ENCODE measurements at regions of chr11 and their contacts with region 1.

Region 1: GRCh38 chr11:9565822-9566560 is 7.5 kb upstream of the WEE1 start:
- DNase-seq: peak; percentile 63
- H3K4me3 ChIP-seq: no peak overlapping the region
- H3K27ac ChIP-seq: peak overlapping the region; percentile 93
- H3K4me1 ChIP-seq: peaks cover 21% of the 10 kb centered on the region
- H3K27me3 ChIP-seq: no peaks in the 10 kb centered on the region
- CTCF ChIP-seq: no peak
- POLR2A ChIP-seq: peak; percentile 55

Region 2: GRCh38 chr11:9428706-9429105 is 137.3 kb before region 1 on chr11:
- intact Hi-C with region 1: no loop called
- DNase-seq: no peak
- H3K4me3 ChIP-seq: no peak overlapping the region
- H3K27ac ChIP-seq: no peak overlapping the region
- H3K4me1 ChIP-seq: no peaks in the 10 kb centered on the region
- H3K27me3 ChIP-seq: no peaks in the 10 kb centered on the region
- CTCF ChIP-seq: no peak
- POLR2A ChIP-seq: no peak

Region 3: DNA sequence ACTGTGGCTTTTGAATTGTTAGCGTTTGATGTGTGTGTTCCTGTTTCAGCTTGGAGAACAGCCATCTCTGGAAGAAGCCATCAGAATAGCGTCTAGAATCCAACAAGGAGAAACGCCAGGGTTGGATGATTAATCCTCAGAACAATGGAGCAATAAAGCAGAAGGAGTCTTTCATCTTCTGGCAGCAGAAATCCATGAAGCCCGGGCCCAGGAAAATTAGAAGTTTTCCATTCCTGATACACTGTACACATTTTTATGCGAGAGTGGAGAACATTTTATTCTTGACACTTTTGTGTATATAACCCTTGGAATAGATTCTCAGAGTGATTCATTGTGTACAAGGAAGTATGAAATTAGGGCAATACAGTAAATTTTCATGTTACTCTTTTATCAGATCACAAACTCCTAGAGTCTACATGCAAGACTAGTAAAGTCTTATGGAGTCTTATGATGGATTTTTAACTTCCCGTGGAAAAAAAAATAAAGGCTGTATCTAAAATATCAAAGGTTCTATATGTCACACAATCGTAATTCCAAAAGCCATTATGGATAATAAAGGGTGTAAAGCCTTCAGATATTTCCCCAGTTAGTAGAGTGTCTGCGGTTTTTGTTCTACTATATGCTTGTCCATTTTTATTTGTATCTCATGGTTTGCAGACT is 38.4 kb before region 1 on chr11:
- intact Hi-C with region 1: loop called (anchors 5 kb)
- DNase-seq: peak; percentile 71
- H3K4me3 ChIP-seq: no peak overlapping the region
- H3K27ac ChIP-seq: peak overlapping the region; percentile 70 to 72
- H3K4me1 ChIP-seq: peaks cover 28% of the 10 kb centered on the region
- H3K27me3 ChIP-seq: no peaks in the 10 kb centered on the region
- CTCF ChIP-seq: no peak
- POLR2A ChIP-seq: no peak

Region 4: GRCh38 chr11:9787981-9788521 is 222.1 kb after region 1 on chr11:
- intact Hi-C with region 1: no loop called
- DNase-seq: no peak
- H3K4me3 ChIP-seq: no peak overlapping the region
- H3K27ac ChIP-seq: no peak overlapping the region
- H3K4me1 ChIP-seq: no peaks in the 10 kb centered on the region
- H3K27me3 ChIP-seq: no peaks in the 10 kb centered on the region
- CTCF ChIP-seq: no peak
- POLR2A ChIP-seq: no peak

Region 5: GRCh38 chr11:9906043-9906791 is 340.2 kb after region 1 on chr11:
- intact Hi-C with region 1: no loop called
- DNase-seq: peak; percentile 20
- H3K4me3 ChIP-seq: no peak overlapping the region
- H3K27ac ChIP-seq: peak overlapping the region in 1 of 2 donors; percentile 22
- H3K4me1 ChIP-seq: no peaks in the 10 kb centered on the region
- H3K27me3 ChIP-seq: no peaks in the 10 kb centered on the region
- CTCF ChIP-seq: no peak
- POLR2A ChIP-seq: no peak

Measured in prostate gland (tissue), 2 donors.